A673 (cell line): ENCODE measurements at regions of chr2 and their contacts with region 1.

Region 1: DNA sequence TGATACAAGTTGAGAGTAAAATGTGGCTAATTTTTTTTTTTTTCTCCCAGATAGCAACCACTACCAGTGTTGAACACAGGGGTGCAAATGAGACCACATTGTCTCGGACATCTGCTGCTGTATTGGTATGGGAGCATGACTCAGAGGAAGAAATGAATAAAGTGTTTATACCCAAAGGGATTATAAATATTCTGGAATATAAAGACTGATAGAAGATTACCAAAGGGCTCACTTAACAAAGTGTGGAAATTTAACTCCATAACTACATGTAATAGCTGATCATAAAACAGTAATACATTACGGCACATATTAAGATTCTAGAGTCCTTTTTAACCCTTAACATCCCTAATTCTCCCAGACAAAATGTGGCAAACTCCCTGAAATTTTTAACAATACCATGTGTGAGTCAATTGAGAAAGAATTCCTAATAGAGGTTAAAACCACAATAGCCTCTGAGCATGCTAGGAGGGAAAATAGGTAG is 1023.0 kb upstream of the ACVR2A start:
- DNase-seq: peak; percentile 87
- H3K4me3 ChIP-seq: no peak overlapping the region
- H3K27ac ChIP-seq: peak overlapping the region; percentile 19
- H3K4me1 ChIP-seq: peaks cover 50% of the 10 kb centered on the region
- H3K27me3 ChIP-seq: no peaks in the 10 kb centered on the region
- CTCF ChIP-seq: peak; percentile 47; the same call in 1 of the 2 replicates

Region 2: DNA sequence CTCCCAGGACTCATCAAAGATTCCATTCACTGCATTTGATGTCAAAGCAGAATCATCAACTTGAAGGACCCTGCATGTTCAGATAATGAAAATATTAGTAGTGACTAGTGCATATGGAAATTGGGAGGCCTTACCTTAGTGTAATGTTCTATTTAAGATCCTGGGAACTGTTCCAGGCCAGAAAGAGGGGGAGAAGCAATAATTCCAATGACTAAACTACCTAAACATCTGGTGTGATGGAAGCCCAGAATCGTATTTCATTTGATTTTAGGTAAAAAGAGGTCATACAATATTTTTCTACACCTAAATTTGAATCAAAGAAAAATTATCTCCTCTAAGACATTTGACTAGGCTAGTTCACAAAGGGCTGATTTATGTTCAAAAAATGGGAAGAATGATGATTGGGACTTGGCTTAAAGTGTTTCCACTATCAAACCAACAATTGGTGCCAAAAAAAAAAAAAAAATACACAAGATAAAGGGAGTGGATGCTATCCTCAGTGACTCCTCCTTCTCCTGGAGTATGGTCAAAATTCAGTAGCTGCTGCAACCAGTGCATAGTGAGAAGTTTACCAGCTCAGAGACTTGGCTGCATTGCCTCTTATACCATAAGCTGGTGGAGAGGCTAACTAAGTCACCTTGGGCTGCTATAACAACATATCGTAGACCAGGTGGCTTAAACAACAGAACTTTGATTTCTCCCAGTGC is 15.4 kb before region 1 on chr2:
- CTCF ChIA-PET with region 1: no interaction called
- POLR2A ChIA-PET with region 1: no interaction called
- intact Hi-C with region 1: no loop called
- DNase-seq: no peak
- H3K4me3 ChIP-seq: no peak overlapping the region
- H3K27ac ChIP-seq: no peak overlapping the region
- H3K4me1 ChIP-seq: no peaks in the 10 kb centered on the region
- H3K27me3 ChIP-seq: no peaks in the 10 kb centered on the region
- CTCF ChIP-seq: no peak

Region 3: DNA sequence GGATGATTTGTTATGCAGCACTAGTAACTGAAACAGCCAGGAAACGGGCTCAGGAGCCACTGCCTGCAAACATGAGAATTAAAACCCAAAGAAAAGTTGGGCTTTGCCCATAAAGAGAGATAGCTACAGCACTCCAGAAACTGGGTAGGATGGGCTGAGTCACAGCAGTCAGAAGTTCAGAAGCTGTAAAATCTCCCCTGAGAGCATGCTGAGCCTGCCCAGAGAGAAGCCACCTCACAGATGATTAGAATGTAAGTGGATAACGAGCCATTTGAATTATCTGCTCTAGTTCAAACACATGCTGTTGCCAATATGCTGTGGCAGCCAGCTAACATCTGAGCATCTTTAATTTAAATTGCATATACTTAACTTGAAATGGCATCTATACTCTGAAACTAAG is 634.9 kb after region 1 on chr2:
- CTCF ChIA-PET with region 1: no interaction called
- POLR2A ChIA-PET with region 1: no interaction called
- intact Hi-C with region 1: loop called (anchors 10 kb)
- DNase-seq: peak; percentile 83
- H3K4me3 ChIP-seq: no peak overlapping the region
- H3K27ac ChIP-seq: no peak overlapping the region
- H3K4me1 ChIP-seq: peaks cover 35% of the 10 kb centered on the region
- H3K27me3 ChIP-seq: no peaks in the 10 kb centered on the region
- CTCF ChIP-seq: no peak